ENCODE measurements at regions of chr22 and their contacts with region 1.

Region 1: DNA sequence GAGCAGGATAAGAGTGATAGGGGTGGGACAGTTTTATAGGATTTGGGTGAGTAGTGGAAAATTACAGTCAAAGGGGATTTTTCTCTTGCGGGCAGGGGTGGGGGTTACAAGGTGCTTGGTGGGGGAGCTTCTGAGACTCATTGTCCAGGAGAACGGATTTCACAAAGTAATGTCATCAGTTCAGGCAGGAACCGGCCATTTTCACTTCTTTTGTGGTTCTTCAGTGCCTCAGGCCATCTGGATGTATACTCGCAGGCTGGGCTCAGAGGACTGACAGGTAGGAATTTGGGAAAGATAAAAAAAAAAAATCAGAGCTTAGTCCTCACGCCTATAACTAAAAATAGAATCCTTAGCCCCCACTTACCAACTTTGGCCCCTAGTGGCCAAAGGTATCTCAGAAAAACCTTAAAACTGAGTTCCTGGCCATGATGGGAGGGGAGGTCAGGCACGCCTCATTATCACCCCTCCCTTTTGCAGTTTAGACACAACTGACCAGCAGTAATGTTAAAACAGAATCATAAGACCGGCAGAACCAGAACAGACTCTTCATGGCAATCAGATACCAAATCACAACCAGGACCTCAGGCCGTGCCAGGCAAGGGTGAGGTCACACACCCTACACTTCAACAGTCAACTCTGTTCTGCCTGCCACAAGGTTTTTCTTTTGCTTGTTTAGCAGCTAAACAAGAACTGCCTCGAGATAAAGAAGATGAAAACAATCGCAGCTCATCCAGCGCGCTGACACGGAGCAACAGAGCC is 8.9 kb upstream of the APOBEC3G start:
- DNase-seq: peak; percentile 42
- ATAC-seq: no peak
- H3K4me3 ChIP-seq: peak overlapping the region; percentile 50 to 99 (median 96)
- H3K4me3 Mint-ChIP-seq: no peak overlapping the region
- H3K27ac ChIP-seq: peak overlapping the region; percentile 97 to 98
- H3K27ac Mint-ChIP-seq: no peak overlapping the region
- H3K4me1 ChIP-seq: peaks cover 70 to 95% of the 10 kb centered on the region in 2 donors
- H3K4me1 Mint-ChIP-seq: peaks cover 45% of the 10 kb centered on the region
- H3K27me3 ChIP-seq: no peaks in the 10 kb centered on the region
- H3K27me3 Mint-ChIP-seq: no peaks in the 10 kb centered on the region
- CTCF ChIP-seq: peak; percentile 54

Region 2: DNA sequence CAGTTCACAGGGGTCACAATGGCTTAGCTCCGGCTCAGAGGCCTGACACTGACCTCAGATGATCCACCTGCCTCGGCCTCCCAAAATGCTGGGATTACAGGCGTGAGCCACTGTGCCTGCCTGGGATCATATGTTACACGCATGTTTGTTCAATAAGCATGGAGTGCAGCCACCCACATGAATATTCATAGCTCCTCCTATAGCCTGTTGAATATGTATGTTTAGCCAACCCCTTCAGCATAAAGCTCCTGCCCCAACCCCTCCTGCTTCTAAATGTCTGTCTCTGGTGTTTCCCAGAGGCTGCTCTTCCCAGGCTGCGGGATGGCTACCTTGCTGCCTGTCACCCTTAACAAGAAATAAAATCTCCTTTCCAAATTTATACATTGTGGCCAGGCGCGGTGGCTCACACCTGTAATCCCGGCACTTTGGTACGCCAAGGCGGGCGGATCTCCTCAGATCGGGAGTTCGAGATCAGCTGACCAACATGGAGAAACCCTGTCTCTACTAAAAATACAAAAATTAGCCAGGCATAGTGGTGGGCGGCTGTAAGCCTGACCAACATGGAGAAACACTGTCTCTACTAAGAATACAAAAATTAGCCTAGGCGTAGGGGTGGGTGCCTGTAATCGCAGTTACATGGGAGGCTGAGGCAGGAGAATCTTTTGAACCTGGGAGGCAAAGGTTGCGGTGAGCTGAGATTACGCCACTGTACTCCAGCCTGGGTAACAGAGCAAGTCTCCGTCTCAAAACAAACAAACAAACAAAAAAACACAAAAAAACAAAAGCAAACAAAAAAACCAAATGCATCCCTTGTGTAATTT is 28.7 kb before region 1 on chr22:
- CTCF ChIA-PET with region 1: no interaction called
- POLR2A ChIA-PET with region 1: interaction called, 3 read pairs
- intact Hi-C with region 1: loop called (anchors 1 kb)
- DNase-seq: no peak
- ATAC-seq: no peak
- H3K4me3 ChIP-seq: peak overlapping the region in 1 of 5 experiments; percentile 59
- H3K4me3 Mint-ChIP-seq: peak overlapping the region; percentile 92
- H3K27ac ChIP-seq: peak overlapping the region; percentile 51 to 91
- H3K27ac Mint-ChIP-seq: peak overlapping the region; percentile 90
- H3K4me1 ChIP-seq: peaks cover 20 to 47% of the 10 kb centered on the region in 2 donors
- H3K4me1 Mint-ChIP-seq: peaks cover 40% of the 10 kb centered on the region
- H3K27me3 ChIP-seq: no peaks in the 10 kb centered on the region
- H3K27me3 Mint-ChIP-seq: no peaks in the 10 kb centered on the region
- CTCF ChIP-seq: no peak

Region 3: GRCh38 chr22:39117585-39118191 is 49.5 kb after region 1 on chr22:
- CTCF ChIA-PET with region 1: interaction called, 4 read pairs
- POLR2A ChIA-PET with region 1: interaction called, 3 read pairs
- intact Hi-C with region 1: loop called (anchors 2 kb)
- DNase-seq: peak; percentile 83
- ATAC-seq: peak; percentile 56
- H3K4me3 ChIP-seq: no peak overlapping the region
- H3K4me3 Mint-ChIP-seq: peak overlapping the region; percentile 61
- H3K27ac ChIP-seq: peak overlapping the region; percentile 1 to 11
- H3K27ac Mint-ChIP-seq: peak overlapping the region; percentile 68
- H3K4me1 ChIP-seq: peaks cover 40 to 43% of the 10 kb centered on the region in 2 donors
- H3K4me1 Mint-ChIP-seq: peaks cover 46% of the 10 kb centered on the region
- H3K27me3 ChIP-seq: no peaks in the 10 kb centered on the region
- H3K27me3 Mint-ChIP-seq: no peaks in the 10 kb centered on the region
- CTCF ChIP-seq: peak; percentile 78